Activated B cell treated with CpG ODN at 0.5 μM for 24 hours (primary cell): ENCODE measurements at regions of chr7 and their contacts with region 1.

Region 1: GRCh38 chr7:90661290-90662151 is 65.4 kb downstream of the CDK14 start:
- DNase-seq: no peak
- ATAC-seq: no peak
- H3K4me3 Mint-ChIP-seq: no peak overlapping the region
- H3K27ac Mint-ChIP-seq: peak overlapping the region; percentile 62
- H3K4me1 Mint-ChIP-seq: peaks cover 45% of the 10 kb centered on the region
- H3K27me3 Mint-ChIP-seq: no peaks in the 10 kb centered on the region
- CTCF ChIP-seq: no peak

Region 2: GRCh38 chr7:91264046-91264923 is 602.8 kb after region 1 on chr7 and contains the start of gene FZD1:
- CTCF ChIA-PET with region 1: no interaction called
- POLR2A ChIA-PET with region 1: no interaction called
- intact Hi-C with region 1: loop called (anchors 10 kb)
- DNase-seq: peak; percentile 54
- ATAC-seq: peak; percentile 86
- H3K4me3 Mint-ChIP-seq: peak within 1 kb of the TSS; percentile 90
- H3K27ac Mint-ChIP-seq: peak within 1 kb of the TSS; percentile 65
- H3K4me1 Mint-ChIP-seq: peaks cover 21% of the 10 kb centered on the region
- H3K27me3 Mint-ChIP-seq: peaks cover 36% of the 10 kb centered on the region
- CTCF ChIP-seq: no peak
- total RNA-seq, gene FZD1: 0.42 and 0.55 TPM in 2 replicates